HCT116 (cell line): ENCODE measurements at regions of chr3 and their contacts with region 1.

Region 1: GRCh38 chr3:112642912-112643506 is 2.1 kb upstream of the CCDC80 start:
- DNase-seq: peak; percentile 77
- ATAC-seq: peak; percentile 99
- H3K4me3 ChIP-seq: peak overlapping the region; percentile 1 to 4; a peak in 1 of 4 replicates
- H3K27ac ChIP-seq: no peak overlapping the region
- H3K4me1 ChIP-seq: peaks cover 0 to 21% of the 10 kb centered on the region in 2 experiments; a peak in 3 of 4 replicates
- H3K27me3 ChIP-seq: no peaks in the 10 kb centered on the region
- CTCF ChIP-seq: peak; percentile 82 to 94 (median 84)
- POLR2A ChIP-seq: no peak
- RAD21 ChIP-seq: peak; percentile 97

Region 2: DNA sequence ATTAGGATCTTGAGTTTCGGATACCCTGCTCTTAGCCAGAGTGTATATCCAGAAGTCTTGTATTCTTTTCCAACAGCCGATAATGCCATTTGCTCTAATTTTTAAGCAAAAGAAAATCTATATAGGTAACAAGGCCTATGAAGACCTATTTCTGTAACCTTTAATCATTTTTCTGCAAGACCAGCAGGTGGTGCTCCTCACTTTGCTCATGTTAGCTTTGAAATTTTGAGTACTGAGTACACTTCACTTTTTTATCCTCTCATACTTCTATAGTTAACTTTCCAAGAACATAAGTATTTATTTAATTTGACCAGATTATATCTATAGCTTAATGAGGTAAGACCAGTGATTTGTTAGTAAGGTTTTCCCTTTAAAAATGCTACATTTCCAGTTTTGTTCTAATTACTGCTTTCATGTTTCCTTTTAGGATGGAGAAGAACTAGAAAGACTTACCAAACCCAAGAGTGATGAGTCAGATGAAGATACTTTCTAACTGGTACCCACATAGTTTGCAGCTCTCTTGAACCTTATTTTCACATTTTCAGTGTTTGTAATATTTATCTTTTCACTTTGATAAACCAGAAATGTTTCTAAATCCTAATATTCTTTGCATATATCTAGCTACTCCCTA is 60.6 kb before region 1 on chr3:
- CTCF ChIA-PET with region 1: interaction called, 3 read pairs
- POLR2A ChIA-PET with region 1: no interaction called
- RAD21 ChIA-PET with region 1: no interaction called
- intact Hi-C with region 1: loop called (anchors 5 kb)
- DNase-seq: peak; percentile 34
- ATAC-seq: peak; percentile 64
- H3K4me3 ChIP-seq: no peak overlapping the region
- H3K27ac ChIP-seq: no peak overlapping the region
- H3K4me1 ChIP-seq: no peaks in the 10 kb centered on the region
- H3K27me3 ChIP-seq: no peaks in the 10 kb centered on the region
- CTCF ChIP-seq: peak; percentile 41 to 71 (median 62); a peak in 5 of 6 replicates
- POLR2A ChIP-seq: no peak
- RAD21 ChIP-seq: peak; percentile 72

Region 3: DNA sequence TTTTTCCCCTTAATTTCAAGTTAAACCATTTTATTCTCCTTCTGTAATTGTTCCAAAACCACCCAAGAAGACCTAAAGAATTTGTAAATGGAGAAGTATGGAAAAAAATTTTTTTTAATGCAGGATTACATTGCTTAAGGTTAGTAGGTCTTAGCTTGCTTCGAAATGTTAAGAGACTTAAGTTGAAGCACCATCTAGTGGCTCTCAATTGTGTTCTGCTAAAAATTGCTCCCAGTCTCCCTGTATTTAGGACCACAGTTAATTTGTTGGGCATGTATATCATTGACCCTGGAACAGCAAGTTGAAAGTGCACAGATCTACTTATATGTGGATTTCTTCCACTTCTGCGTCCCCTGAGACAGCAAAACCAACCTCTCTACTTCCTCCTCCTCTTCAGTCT is 171.3 kb after region 1 on chr3:
- CTCF ChIA-PET with region 1: interaction called, 26 read pairs
- POLR2A ChIA-PET with region 1: interaction called, 3 read pairs
- RAD21 ChIA-PET with region 1: interaction called in 1 of 2 experiments, 3 read pairs
- intact Hi-C with region 1: loop called (anchors 1 kb)
- DNase-seq: peak; percentile 21
- ATAC-seq: peak; percentile 72
- H3K4me3 ChIP-seq: no peak overlapping the region
- H3K27ac ChIP-seq: no peak overlapping the region
- H3K4me1 ChIP-seq: no peaks in the 10 kb centered on the region
- H3K27me3 ChIP-seq: 0 out of 2 replicates have a peak, but pooled peaks cover 5% of the 10 kb centered on the region
- CTCF ChIP-seq: peak; percentile 34 to 51 (median 41); a peak in 3 of 6 replicates
- POLR2A ChIP-seq: no peak
- RAD21 ChIP-seq: peak; percentile 65

Region 4: DNA sequence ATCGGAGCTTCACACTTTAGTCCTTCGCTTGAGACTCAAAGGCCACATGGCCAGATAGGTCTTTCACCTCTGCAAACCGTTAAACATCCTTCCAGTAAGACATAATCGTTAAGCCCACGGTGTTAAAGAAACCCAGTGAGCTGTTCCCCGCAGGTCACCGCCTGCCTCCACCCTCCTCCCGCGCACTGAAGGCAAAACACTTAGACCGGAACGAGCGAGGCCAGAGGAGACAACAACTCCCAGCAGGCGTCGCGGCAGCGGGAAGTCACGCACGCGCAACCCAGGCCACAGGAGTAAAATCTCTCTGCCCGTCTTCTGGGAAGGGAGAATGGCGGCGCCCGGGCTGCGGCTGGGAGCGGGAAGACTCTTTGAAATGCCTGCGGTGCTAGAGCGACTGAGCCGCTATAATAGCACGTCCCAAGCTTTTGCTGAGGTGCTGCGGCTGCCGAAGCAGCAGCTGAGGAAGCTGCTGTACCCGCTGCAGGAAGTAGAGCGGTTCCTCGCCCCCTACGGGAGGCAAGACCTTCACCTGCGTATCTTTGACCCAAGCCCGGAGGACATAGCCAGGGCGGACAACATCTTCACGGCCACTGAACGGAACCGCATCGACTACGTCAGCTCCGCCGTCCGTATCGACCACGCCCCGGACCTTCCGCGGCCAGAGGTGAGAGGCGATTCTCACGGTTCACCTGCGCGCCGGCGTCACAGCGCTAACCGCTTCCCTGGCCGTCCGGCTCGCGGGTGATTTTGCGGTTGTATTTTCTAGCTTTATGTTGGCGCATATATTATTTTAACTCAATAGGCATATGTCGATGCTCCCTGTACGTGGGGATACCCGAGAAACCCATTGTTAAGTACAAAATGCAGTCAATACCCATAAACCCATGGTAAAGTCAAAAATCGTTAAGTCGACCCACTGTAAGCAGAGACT is 347.9 kb after region 1 on chr3 and contains the start of gene GTPBP8:
- CTCF ChIA-PET with region 1: interaction called, 4 read pairs
- POLR2A ChIA-PET with region 1: no interaction called
- RAD21 ChIA-PET with region 1: no interaction called
- intact Hi-C with region 1: loop called (anchors 5 kb)
- DNase-seq: peak; percentile 86
- ATAC-seq: peak; percentile 96
- H3K4me3 ChIP-seq: peak within 1 kb of the TSS; percentile 80 to 87
- H3K27ac ChIP-seq: peak within 1 kb of the TSS; percentile 81
- H3K4me1 ChIP-seq: peaks cover 8 to 17% of the 10 kb centered on the region in 2 experiments
- H3K27me3 ChIP-seq: no peaks in the 10 kb centered on the region
- CTCF ChIP-seq: no peak
- POLR2A ChIP-seq: peak; percentile 92
- RAD21 ChIP-seq: no peak
- total RNA-seq, gene GTPBP8: 16.4 TPM

Region 5: GRCh38 chr3:113287803-113288648 is 645.0 kb after region 1 on chr3:
- CTCF ChIA-PET with region 1: interaction called, 13 read pairs
- POLR2A ChIA-PET with region 1: no interaction called
- RAD21 ChIA-PET with region 1: no interaction called
- intact Hi-C with region 1: loop called (anchors 2 kb)
- DNase-seq: peak; percentile 57
- ATAC-seq: peak; percentile 66
- H3K4me3 ChIP-seq: no peak overlapping the region
- H3K27ac ChIP-seq: no peak overlapping the region
- H3K4me1 ChIP-seq: peaks cover 8 to 11% of the 10 kb centered on the region in 2 experiments; a peak in 3 of 4 replicates
- H3K27me3 ChIP-seq: no peaks in the 10 kb centered on the region
- CTCF ChIP-seq: peak; percentile 94 to 97 (median 97)
- POLR2A ChIP-seq: no peak
- RAD21 ChIP-seq: peak; percentile 96